IMR-90 (cell line): ENCODE measurements at regions of chr5 and their contacts with region 1.

Region 1: GRCh38 chr5:19987612-19988503 is at the start of gene CDH18:
- DNase-seq: peak; percentile 38
- ATAC-seq: peak; percentile 100
- H3K4me3 ChIP-seq: peak within 1 kb of the TSS; percentile 38
- H3K27ac ChIP-seq: no peak within 1 kb of the TSS
- H3K4me1 ChIP-seq: no peaks in the 10 kb centered on the region
- H3K27me3 ChIP-seq: peaks cover 3% of the 10 kb centered on the region; the same call in 1 of the 2 replicates
- CTCF ChIP-seq: no peak
- POLR2A ChIP-seq: no peak
- RAD21 ChIP-seq: no peak
- total RNA-seq, gene CDH18: 0.83 and 1.1 TPM in 2 replicates

Region 2: GRCh38 chr5:19806776-19807175 is 181.1 kb before region 1 on chr5:
- CTCF ChIA-PET with region 1: no interaction called
- POLR2A ChIA-PET with region 1: no interaction called
- dilution Hi-C with region 1: no loop called
- in situ Hi-C with region 1: no loop called
- intact Hi-C with region 1: loop called (anchors 5 kb)
- DNase-seq: no peak
- ATAC-seq: no peak
- H3K4me3 ChIP-seq: no peak overlapping the region
- H3K27ac ChIP-seq: no peak overlapping the region
- H3K4me1 ChIP-seq: no peaks in the 10 kb centered on the region
- H3K27me3 ChIP-seq: no peaks in the 10 kb centered on the region
- CTCF ChIP-seq: no peak
- POLR2A ChIP-seq: no peak
- RAD21 ChIP-seq: no peak

Region 3: GRCh38 chr5:20041326-20042274 is 53.7 kb after region 1 on chr5:
- CTCF ChIA-PET with region 1: no interaction called
- POLR2A ChIA-PET with region 1: no interaction called
- dilution Hi-C with region 1: no loop called
- in situ Hi-C with region 1: no loop called
- intact Hi-C with region 1: no loop called
- DNase-seq: no peak
- ATAC-seq: no peak
- H3K4me3 ChIP-seq: no peak overlapping the region
- H3K27ac ChIP-seq: no peak overlapping the region
- H3K4me1 ChIP-seq: no peaks in the 10 kb centered on the region
- H3K27me3 ChIP-seq: no peaks in the 10 kb centered on the region
- CTCF ChIP-seq: no peak
- POLR2A ChIP-seq: no peak
- RAD21 ChIP-seq: no peak

Region 4: DNA sequence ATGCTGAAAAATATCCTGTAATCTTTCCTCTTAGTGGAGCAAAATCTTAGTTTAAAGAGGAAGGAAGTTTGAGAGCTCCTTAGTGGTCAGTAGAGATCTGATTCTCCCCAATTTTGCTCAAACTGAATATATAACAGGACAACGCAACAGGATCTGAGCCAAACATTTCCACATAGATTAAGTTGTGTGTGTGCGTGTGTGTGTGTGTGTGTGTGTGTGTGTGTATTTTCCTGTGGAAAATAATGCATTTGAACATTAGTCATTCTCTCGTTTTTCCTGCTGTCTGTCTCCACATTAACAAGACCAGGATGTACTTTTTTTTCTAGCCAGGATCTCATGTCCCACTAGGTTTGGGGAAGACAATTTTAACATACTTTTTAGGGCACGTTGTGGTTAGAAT is 312.3 kb after region 1 on chr5:
- CTCF ChIA-PET with region 1: no interaction called
- POLR2A ChIA-PET with region 1: no interaction called
- dilution Hi-C with region 1: no loop called
- in situ Hi-C with region 1: no loop called
- intact Hi-C with region 1: no loop called
- DNase-seq: no peak
- ATAC-seq: no peak
- H3K4me3 ChIP-seq: no peak overlapping the region
- H3K27ac ChIP-seq: no peak overlapping the region
- H3K4me1 ChIP-seq: no peaks in the 10 kb centered on the region
- H3K27me3 ChIP-seq: no peaks in the 10 kb centered on the region
- CTCF ChIP-seq: no peak
- POLR2A ChIP-seq: no peak
- RAD21 ChIP-seq: no peak